Activated CD4-positive, alpha-beta T cell treated with anti-CD3 and anti-CD28 coated beads for 36 hours (primary cell): ENCODE measurements at regions of chr10 and their contacts with region 1.

Region 1: GRCh38 chr10:79347226-79347893 is at the start of gene PPIF:
- DNase-seq: peak; percentile 97
- ATAC-seq: peak; percentile 88
- H3K4me3 Mint-ChIP-seq: peak within 1 kb of the TSS; percentile 85
- H3K27ac Mint-ChIP-seq: peak within 1 kb of the TSS; percentile 93
- H3K4me1 Mint-ChIP-seq: peaks cover 22% of the 10 kb centered on the region
- H3K27me3 Mint-ChIP-seq: no peaks in the 10 kb centered on the region
- total RNA-seq, gene PPIF: 92.3 to 96.1 TPM

Region 2: GRCh38 chr10:78029269-78030226 is 1317.8 kb before region 1 on chr10 and contains the start of gene POLR3A:
- CTCF ChIA-PET with region 1: no interaction called
- POLR2A ChIA-PET with region 1: no interaction called
- intact Hi-C with region 1: loop called in 1 of 2 experiments (anchors 5 kb)
- DNase-seq: peak; percentile 96
- ATAC-seq: peak; percentile 65
- H3K4me3 Mint-ChIP-seq: peak within 1 kb of the TSS; percentile 99
- H3K27ac Mint-ChIP-seq: peak within 1 kb of the TSS; percentile 98
- H3K4me1 Mint-ChIP-seq: peaks cover 34% of the 10 kb centered on the region
- H3K27me3 Mint-ChIP-seq: no peaks in the 10 kb centered on the region
- total RNA-seq, gene POLR3A: 18.3 to 19.3 TPM

Region 3: DNA sequence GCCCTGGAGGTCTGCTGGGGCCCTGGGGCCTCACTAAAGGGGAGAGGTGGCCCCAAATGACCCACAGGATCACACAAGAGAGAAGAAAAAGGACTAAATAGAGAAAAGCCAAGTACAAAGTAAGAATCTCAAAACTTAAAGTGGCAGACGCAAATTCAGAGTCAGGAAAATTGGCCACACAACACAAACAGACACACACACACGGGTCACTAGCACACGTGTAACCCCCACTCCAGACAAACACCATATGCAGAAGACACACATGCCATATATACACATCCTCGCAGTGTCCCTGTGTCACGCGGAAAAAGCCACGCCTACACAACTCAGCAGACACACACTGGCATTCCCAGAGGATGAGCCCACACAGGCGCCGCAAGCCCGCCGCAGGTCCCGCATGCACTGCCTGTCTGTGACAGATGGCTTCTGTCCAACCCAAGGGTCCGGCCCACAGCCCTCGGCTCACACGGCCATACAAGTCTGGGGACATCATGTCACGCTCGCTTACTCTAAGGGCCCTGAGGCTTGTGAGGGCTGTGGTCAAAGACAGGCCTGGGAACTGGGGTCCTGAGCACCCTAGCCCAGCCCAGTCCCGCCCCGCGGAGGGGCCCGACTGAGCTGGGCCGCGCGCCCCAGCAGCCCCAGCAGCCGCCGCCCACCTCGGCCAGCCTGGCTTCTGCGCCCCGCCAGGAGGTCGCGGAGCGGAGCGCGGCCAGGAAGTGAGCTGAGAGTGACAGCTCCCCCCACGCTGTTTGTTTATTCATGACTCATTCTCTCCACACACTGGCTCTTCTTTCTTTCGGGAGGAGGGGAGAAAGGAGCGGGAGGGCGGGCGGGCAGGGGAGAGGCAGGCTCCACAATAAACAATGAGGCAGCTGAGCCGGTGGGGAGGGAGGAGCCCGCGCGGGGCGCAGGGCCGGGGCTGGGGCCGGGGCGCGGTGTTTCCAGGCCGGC is 374.1 kb before region 1 on chr10:
- CTCF ChIA-PET with region 1: no interaction called
- POLR2A ChIA-PET with region 1: no interaction called
- intact Hi-C with region 1: loop called in 1 of 2 experiments (anchors 1 kb)
- DNase-seq: peak; percentile 86
- ATAC-seq: peak; percentile 63
- H3K4me3 Mint-ChIP-seq: peak overlapping the region; percentile 58
- H3K27ac Mint-ChIP-seq: peak overlapping the region; percentile 77
- H3K4me1 Mint-ChIP-seq: peaks cover 32% of the 10 kb centered on the region
- H3K27me3 Mint-ChIP-seq: peaks cover 2% of the 10 kb centered on the region

Region 4: GRCh38 chr10:79242620-79243152 is 104.7 kb before region 1 on chr10:
- CTCF ChIA-PET with region 1: interaction called, 3 read pairs
- POLR2A ChIA-PET with region 1: no interaction called
- intact Hi-C with region 1: loop called in 1 of 2 experiments (anchors 1 kb)
- DNase-seq: peak; percentile 85
- ATAC-seq: peak; percentile 50
- H3K4me3 Mint-ChIP-seq: peak overlapping the region; percentile 74
- H3K27ac Mint-ChIP-seq: peak overlapping the region; percentile 52
- H3K4me1 Mint-ChIP-seq: peaks cover 55% of the 10 kb centered on the region
- H3K27me3 Mint-ChIP-seq: no peaks in the 10 kb centered on the region

Region 5: DNA sequence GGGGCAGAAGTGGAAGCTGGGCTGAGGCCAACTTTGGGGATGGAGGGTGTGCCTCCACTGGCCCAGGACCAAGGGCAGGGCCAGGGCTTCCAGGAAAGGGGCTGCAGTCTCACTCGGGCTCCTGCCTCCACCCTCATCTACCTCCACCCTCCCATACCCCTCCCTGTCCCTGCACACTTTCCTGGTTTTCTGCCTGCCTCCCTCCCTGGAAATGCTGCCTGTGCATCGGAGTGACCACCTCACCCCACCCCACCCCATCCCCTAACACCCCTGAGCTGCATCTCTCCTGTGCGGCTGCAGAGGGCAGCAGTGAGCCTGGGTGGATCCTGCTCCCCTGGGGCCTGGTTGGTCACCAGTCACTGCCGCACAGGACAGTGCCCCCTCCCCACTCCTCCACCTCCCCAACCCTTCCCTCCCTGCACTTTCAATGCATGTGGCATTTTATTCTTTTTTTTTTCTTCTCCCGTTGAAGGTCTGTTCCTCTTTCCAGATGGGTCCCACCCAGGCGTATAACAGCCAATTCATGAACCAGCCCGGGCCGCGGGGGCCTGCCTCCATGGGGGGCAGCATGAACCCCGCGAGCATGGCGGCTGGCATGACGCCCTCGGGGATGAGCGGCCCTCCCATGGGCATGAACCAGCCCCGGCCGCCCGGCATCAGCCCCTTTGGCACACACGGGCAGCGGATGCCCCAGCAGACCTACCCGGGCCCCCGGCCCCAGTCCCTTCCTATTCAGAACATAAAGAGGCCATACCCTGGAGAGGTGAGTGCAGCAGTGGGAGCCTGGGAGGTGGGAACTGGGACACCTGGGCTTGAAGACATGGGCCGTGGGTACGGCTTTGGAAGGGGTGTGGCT is 54.2 kb before region 1 on chr10:
- CTCF ChIA-PET with region 1: interaction called, 3 read pairs
- POLR2A ChIA-PET with region 1: no interaction called
- intact Hi-C with region 1: loop called in 1 of 2 experiments (anchors 2 kb)
- DNase-seq: peak; percentile 64
- ATAC-seq: peak; percentile 78
- H3K4me3 Mint-ChIP-seq: no peak overlapping the region
- H3K27ac Mint-ChIP-seq: no peak overlapping the region
- H3K4me1 Mint-ChIP-seq: peaks cover 15% of the 10 kb centered on the region
- H3K27me3 Mint-ChIP-seq: no peaks in the 10 kb centered on the region

Region 6: DNA sequence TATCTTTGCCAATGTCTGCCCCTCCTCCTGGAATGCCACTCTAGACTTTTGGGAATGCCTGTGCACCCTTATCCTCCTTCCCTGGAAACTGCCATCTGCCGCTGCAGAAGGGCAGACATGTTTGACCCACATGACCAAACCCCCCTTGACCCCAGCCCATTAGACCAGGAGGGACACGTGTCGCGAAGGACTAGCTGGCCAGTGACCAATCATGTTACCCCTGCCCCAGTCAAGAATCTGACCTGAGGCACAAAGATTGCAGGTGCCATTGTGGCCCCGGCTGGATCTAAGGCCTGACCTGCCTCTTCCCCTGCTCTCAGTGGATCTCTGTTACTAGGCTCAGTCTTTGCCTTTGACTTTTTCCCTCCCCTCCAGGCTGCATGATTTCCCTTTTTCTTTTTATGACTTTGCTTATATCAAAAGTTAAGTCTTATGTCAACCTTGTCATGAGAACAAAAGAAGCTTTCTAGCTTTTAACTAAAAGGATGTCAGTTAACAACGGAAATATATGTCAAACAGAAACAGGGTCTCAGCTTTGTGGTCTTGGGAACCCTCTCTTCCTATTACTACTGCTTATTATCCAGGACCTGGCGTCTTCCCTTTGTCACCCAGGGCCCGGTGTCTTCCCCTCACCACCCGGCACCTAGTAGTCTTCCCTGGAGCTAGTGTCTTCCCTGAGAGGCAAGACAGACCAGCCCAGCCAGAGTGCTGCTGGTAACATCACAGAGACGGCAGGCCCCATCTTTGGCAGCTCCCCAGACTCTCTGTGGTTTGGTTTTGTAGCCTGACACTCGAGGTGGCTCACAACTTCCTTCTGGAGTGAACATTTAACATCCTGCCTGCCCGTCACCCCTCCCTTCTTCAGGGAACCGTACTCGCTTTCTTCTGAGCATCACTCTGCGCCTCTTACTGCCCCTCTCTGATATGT is 24.5 kb before region 1 on chr10:
- CTCF ChIA-PET with region 1: interaction called, 10 read pairs
- POLR2A ChIA-PET with region 1: interaction called, 7 read pairs
- intact Hi-C with region 1: loop called in 1 of 2 experiments (anchors 1 kb)
- DNase-seq: peak; percentile 91
- ATAC-seq: peak; percentile 75
- H3K4me3 Mint-ChIP-seq: peak overlapping the region; percentile 46
- H3K27ac Mint-ChIP-seq: peak overlapping the region; percentile 94
- H3K4me1 Mint-ChIP-seq: peaks cover 70% of the 10 kb centered on the region
- H3K27me3 Mint-ChIP-seq: no peaks in the 10 kb centered on the region

Region 7: DNA sequence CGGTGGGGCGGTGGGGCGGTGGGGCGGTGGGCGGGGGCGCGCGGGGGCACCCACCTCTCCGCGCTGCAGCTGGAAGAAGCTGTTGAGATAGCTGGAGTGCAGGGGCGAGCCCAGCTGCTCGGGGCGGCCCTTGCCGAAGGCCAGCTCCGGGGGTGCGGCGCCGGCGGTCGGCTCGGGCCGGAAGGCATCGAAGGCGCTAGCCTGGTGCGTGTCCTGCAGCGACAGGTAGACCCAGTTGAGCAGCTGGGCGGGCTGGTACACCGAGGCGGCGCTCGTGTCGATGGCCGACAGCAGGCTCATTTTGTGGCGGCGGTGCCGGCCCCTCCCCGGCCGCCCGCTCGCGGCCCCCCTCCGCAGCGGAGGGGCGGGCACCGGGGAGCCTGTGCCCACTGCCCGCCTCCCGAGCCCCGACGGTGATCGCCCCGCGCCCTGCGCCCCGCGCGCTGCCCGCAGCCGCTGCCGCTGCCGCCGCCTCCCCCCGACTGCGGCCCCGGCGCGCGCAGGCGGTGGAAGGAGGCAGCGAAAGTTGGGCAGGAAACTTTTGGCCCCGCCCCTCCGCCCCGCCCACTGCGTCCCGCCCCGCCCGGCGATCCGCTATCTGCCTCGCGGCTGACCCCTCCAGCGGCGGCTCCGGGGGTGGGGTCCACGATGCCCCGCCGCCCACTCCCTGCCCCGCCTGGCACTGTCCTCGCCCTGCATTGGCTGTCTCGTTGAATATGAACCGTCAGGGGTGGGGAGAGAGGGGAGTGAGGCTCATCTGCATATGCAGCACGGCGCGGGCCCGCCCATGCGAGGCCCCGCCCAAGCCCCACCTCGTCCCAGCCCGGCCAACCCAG is 98.0 kb after region 1 on chr10 and contains the start of gene ZCCHC24:
- CTCF ChIA-PET with region 1: no interaction called
- POLR2A ChIA-PET with region 1: no interaction called
- intact Hi-C with region 1: loop called (anchors 1 to 5 kb)
- DNase-seq: peak; percentile 93
- ATAC-seq: peak; percentile 97
- H3K4me3 Mint-ChIP-seq: peak within 1 kb of the TSS; percentile 65
- H3K27ac Mint-ChIP-seq: no peak within 1 kb of the TSS
- H3K4me1 Mint-ChIP-seq: peaks cover 16% of the 10 kb centered on the region
- H3K27me3 Mint-ChIP-seq: peaks cover 7% of the 10 kb centered on the region
- total RNA-seq, gene ZCCHC24: 0.53 to 0.75 TPM